GM10248 (cell line): ENCODE measurements at regions of chr6 and their contacts with region 1.

Region 1: DNA sequence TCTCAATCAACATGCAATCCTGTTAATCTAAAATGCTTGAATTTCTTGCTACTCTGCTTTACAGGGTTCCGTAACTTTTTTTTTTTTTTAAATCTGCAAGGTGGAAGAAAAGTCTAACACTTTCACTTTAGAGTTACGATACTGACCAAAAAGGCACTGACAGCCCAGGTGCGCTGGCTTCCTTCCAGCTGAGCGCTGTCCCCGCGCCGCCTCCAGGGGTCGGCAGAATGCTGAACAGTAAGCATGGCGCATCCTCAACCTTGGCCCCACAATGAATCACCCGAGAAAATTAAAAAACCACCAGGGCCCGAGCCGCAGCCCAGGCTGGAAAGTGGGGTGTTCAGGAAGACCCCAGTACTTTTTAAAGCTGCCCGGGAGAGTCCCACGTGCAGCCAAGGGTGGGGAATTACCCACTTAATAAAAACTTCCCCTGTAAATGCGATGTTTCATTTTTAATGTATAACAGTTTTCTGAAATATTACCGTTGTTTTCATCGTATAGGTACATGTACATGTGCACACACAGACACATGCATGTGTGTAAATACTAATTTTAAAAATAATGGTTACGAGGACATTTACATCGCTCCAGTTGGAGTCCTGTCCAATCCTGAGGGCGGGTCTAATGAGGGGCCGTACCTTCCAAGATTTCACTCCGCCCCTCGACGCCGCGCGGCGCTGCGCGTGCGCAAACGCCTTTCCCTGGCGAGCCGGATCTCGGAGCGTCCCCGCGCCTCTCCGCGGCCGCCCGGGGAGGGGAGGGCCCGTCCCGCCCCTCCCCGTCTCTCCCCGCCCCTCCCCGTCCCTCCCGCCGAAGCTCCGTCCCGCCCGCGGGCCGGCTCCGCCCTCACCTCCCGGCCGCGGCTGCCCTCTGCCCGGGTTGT is at the start of gene GINM1:
- DNase-seq: peak; percentile 99
- CTCF ChIP-seq: peak; percentile 89

Region 2: DNA sequence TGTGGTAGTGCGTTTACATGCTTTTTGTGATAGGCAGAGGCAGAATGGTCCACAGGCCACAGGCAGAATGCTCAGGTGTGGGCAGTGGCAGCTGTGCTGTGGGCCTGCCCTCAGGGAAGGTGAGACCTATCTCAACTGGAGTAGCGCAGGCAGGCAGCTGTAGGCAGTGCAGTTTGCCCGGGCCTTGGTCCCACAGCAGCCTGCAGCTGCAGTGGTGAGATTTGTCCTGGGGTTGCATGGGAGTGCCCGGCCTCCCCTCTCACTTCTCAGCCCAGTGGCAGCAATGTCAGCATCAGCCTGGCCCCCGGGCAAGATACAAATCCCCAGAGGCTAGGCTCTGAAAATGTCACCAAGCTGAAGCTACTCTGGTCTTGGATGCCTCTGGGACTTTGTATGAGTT is 13.8 kb before region 1 on chr6:
- CTCF ChIA-PET with region 1: interaction called, 52 read pairs
- POLR2A ChIA-PET with region 1: interaction called, 4 read pairs
- DNase-seq: no peak
- CTCF ChIP-seq: no peak

Region 3: DNA sequence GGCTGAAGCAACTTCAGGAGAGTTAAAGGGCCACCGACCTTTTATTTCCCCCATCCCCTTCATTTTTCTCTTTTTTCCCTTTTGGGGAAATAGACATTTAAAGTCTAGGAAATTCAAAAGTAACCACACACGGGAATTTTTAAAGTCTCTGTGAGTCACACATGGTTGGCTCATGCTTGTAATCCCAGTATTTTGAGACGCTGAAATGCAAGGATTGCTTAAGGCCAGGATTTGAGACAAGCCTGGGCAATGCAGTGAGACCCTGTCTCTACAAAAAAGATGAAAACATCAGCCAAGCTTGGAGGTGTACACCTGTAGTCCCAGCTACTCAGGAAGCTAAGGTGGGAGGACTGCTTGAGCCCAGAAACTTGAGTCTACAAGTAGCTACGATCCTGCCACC is 48.6 kb after region 1 on chr6:
- CTCF ChIA-PET with region 1: no interaction called
- POLR2A ChIA-PET with region 1: no interaction called
- DNase-seq: no peak
- CTCF ChIP-seq: no peak